ENCODE measurements at regions of chr15 and their contacts with region 1.

Region 1: DNA sequence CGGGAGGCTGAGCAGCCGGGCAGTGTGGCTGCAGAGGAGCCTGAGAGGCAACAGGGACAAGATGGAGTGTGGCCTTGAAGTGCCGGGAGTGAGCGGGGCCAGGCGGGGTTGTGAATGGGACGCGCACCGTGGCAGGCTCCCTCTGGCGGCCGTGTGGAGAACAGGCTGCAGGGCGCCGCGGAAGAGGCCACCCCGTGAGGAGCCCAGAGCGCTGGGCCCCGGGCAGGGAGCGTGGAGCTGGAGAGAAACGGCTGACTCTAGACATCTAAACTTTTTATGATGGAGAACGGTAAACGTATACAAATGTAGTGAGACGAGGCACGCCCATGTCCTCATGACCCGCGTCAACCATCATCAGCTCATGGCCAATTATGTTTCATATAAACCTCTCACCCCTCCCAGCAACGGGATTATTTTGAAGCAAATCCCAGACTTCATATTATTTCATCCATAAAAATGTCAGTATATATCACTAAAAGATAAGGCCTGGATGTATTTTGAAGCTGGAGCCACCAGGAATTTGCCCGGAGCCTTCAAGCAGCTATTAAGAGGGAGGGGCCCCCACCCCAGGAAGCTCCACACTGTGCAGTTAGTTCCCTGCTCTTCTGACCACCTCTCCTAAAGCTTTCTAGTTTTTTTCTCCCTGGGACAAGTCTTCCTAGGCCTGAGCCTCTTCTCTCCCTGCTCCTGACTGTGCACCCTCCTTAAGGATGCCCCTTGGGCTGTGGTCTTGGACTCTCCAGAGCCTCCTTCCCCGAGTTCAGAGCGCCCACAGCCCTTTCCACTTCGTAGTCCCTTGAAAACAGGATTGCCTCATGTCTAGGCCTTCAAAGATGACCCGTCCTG is 149.4 kb downstream of the SMAD6 start:
- DNase-seq: peak; percentile 79
- H3K4me3 Mint-ChIP-seq: no peak overlapping the region
- H3K27ac Mint-ChIP-seq: no peak overlapping the region
- H3K4me1 Mint-ChIP-seq: peaks cover 7% of the 10 kb centered on the region
- H3K27me3 Mint-ChIP-seq: peaks cover 8% of the 10 kb centered on the region

Region 2: DNA sequence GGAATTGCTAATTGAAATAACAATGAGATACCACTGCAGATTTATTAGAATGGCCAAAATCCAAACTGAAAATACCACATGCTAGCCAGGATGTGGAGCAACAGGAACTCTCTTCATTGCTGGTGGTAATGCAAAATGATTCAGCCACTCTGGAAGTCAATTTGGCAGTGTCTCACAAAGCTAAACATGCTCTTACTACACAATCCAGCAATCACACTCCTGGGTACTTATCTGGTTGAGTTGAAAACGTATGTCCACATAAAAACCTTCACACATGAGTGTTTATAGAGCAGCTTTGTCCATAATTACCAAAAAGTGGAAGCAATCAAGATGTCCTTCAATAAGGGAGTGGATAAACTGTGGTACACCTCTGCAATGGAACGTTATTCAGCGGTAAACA is 36.1 kb before region 1 on chr15:
- CTCF ChIA-PET with region 1: no interaction called
- POLR2A ChIA-PET with region 1: no interaction called
- DNase-seq: no peak
- H3K4me3 Mint-ChIP-seq: no peak overlapping the region
- H3K27ac Mint-ChIP-seq: no peak overlapping the region
- H3K4me1 Mint-ChIP-seq: no peaks in the 10 kb centered on the region
- H3K27me3 Mint-ChIP-seq: peaks cover 14% of the 10 kb centered on the region

Region 3: DNA sequence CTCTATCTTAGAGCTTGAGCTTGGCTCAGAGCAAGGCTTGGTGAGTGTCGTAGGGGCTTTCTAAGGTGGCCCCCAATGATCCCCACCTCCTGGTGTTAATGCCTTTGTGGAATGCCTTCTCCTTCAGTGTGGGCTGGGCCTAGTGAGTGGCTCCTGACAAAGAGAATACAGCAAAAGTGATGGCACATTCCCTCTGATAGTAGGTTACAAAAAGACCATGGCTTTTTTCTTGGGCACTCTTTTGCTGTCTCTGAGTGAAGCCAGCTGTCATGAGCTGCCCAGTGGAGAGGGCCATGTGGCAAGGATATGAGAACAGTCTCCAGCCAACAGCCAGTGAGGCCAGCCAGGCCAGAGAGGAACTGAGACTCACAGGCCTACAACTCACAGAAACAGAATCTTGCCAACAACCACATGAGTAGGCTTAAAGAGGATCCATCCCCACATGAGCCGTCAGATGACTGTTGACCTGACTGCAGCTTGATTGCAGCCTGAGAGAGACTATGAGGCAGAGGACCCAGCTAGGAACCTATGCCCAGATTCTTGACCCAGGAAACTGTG is 16.0 kb before region 1 on chr15:
- CTCF ChIA-PET with region 1: interaction called, 18 read pairs
- POLR2A ChIA-PET with region 1: no interaction called
- DNase-seq: no peak
- H3K4me3 Mint-ChIP-seq: no peak overlapping the region
- H3K27ac Mint-ChIP-seq: no peak overlapping the region
- H3K4me1 Mint-ChIP-seq: no peaks in the 10 kb centered on the region
- H3K27me3 Mint-ChIP-seq: peaks cover 7% of the 10 kb centered on the region

Region 4: DNA sequence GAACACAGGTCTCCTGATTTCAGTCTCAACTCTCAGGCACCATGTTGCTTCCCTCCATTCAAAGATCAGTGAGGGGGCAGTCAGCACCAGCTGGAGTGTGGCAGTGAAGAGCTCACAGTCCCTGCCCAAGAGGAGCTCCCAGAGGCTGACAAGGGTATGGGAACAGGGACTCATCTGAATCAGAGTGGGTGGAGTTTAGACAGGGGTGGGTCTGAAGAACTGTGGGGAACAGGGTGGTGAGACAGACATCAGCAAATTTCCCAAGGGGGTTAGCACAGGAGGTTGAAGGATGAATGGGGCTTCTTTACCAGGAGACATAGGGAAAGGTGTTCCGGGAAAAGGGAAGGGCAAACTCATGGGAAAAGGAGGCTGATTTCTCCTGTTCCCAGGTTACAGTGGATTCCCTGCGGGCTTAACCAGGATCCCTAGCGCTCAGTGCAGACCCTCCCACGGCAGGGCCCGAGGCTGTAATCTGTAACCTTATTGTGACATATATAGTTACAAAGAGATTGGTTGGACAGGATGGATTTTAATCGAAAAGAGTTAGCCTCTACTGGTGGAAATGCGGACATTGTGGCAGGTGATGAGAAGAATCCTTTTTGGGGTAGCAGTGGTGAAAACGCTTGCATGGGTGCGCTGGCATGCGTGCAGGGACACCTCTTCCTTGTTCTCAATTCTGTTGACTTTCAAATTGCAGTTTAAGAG is 10.8 kb after region 1 on chr15:
- CTCF ChIA-PET with region 1: interaction called, 12 read pairs
- POLR2A ChIA-PET with region 1: no interaction called
- DNase-seq: no peak
- H3K4me3 Mint-ChIP-seq: no peak overlapping the region
- H3K27ac Mint-ChIP-seq: no peak overlapping the region
- H3K4me1 Mint-ChIP-seq: peaks cover 13% of the 10 kb centered on the region
- H3K27me3 Mint-ChIP-seq: peaks cover 12% of the 10 kb centered on the region